Activated CD4-positive, alpha-beta T cell treated with anti-CD3 and anti-CD28 coated beads for 36 hours (primary cell): ENCODE measurements at regions of chr4 and their contacts with region 1.

Region 1: DNA sequence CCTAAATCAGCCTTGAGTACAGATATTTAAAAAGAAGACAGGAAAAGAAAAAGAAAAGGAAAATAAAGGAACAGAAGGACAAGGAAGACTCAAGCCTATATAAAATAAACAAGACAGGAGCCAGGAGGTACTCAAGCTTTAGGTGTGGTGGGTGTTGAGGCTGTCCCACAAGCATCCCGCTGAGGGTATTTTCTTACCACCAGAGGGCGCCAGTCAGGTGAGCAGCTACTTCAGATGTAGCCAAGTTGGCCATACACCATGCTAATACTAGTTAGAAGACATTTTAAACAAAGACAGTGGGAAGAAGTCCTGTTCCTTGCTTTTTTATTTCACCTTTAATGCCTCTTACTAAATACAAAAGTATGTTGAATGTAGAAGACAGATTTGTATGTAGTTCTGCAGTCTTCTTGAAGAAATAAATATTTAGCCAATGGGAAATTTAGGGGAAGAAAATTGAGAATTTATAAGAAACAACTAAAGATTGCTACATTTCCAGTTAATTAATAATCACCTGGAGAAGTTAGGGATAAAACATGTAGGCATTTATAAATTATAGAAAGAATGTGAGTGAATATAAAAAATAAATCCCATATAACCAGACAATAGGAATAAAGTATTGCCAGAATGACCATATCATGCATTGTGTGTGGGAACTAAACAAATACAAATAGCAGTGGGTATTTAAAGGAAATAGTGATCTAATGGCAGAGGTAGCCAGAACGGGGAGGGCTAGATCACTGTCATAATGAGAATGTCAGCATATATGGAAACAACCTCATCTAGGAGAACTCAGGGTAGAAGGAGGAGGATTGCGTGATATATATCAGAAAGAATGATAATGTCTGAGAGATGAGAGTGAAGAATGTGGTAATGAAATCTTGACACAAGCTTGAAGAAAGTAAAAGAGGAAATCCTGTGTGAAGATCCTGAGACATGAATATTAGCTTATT is 71.0 kb downstream of the MTHFD2L start:
- DNase-seq: peak; percentile 87
- ATAC-seq: peak; percentile 85
- H3K4me3 Mint-ChIP-seq: no peak overlapping the region
- H3K27ac Mint-ChIP-seq: no peak overlapping the region
- H3K4me1 Mint-ChIP-seq: peaks cover 8% of the 10 kb centered on the region
- H3K27me3 Mint-ChIP-seq: no peaks in the 10 kb centered on the region

Region 2: DNA sequence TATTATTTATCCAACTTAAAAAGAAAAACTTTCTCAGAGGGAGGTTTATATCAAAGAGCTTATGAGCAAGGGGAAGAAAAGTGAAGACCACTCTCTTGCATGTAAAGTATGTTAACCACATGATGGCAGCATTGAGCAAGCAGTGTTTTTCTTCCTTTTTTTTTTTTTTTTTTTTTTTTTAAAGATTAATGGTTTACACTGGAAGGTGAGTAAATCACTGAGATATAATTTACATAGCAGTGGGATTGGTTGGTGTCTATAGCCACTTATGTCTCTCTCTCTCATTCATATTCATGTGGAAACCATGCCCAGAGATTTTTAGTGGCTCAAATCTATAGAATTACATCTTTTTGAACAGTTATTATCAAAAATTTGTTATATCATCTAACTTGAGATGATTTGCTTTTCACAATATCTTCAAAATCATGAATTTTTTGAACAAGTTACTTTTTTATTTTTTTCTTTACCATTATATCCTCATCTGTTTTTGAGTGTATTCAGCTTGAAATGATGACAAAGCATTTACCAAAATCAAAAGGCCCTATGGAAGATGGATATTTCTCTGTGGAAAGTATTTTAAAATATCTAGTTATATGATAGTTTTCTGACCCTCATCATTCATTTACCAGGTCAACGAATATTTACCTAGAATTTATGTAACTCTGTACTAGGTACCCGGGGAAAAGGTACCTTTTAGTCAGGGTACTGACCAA is 39.5 kb before region 1 on chr4:
- CTCF ChIA-PET with region 1: interaction called, 17 read pairs
- POLR2A ChIA-PET with region 1: no interaction called
- intact Hi-C with region 1: no loop called
- DNase-seq: no peak
- ATAC-seq: peak; percentile 44
- H3K4me3 Mint-ChIP-seq: no peak overlapping the region
- H3K27ac Mint-ChIP-seq: no peak overlapping the region
- H3K4me1 Mint-ChIP-seq: no peaks in the 10 kb centered on the region
- H3K27me3 Mint-ChIP-seq: no peaks in the 10 kb centered on the region

Region 3: GRCh38 chr4:74217365-74217764 is 11.6 kb before region 1 on chr4:
- CTCF ChIA-PET with region 1: interaction called, 11 read pairs
- POLR2A ChIA-PET with region 1: no interaction called
- intact Hi-C with region 1: no loop called
- DNase-seq: no peak
- ATAC-seq: no peak
- H3K4me3 Mint-ChIP-seq: no peak overlapping the region
- H3K27ac Mint-ChIP-seq: no peak overlapping the region
- H3K4me1 Mint-ChIP-seq: peaks cover 2% of the 10 kb centered on the region
- H3K27me3 Mint-ChIP-seq: no peaks in the 10 kb centered on the region